CD8-positive, alpha-beta T cell (primary cell): ENCODE measurements at regions of chr1 and their contacts with region 1.

Region 1: GRCh38 chr1:77504986-77505385 is 177.5 kb downstream of the ZZZ3 start:
- DNase-seq: no peak
- ATAC-seq: no peak
- H3K4me3 ChIP-seq: no peak overlapping the region
- H3K4me3 Mint-ChIP-seq: no peak overlapping the region
- H3K27ac ChIP-seq: no peak overlapping the region
- H3K27ac Mint-ChIP-seq: peak overlapping the region; percentile 1
- H3K4me1 ChIP-seq: no peaks in the 10 kb centered on the region
- H3K4me1 Mint-ChIP-seq: peaks cover 7% of the 10 kb centered on the region
- H3K27me3 ChIP-seq: no peaks in the 10 kb centered on the region
- H3K27me3 Mint-ChIP-seq: no peaks in the 10 kb centered on the region
- CTCF ChIP-seq: no peak

Region 2: DNA sequence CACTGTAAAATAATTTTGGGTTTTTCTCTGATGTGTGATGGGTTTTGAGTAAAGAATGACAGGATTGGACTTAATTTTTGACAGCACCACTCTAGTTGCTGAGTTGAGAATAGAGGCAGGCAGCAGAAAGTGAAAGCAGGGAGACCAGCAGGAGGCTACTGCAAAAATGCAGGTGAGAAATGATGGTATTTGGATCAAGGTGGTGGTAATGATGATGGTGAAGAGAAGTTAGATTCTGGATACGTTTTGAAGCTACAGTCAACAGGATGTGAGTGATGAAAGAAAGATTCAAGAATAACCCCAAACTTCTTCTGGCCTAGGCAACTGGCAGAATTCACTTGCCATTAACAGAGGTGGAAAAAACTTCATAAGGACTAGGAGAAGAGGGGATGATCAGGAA is 238.0 kb before region 1 on chr1:
- CTCF ChIA-PET with region 1: no interaction called
- POLR2A ChIA-PET with region 1: no interaction called
- intact Hi-C with region 1: loop called in 1 of 2 experiments (anchors 10 kb)
- DNase-seq: peak in 1 of 9 experiments; percentile 6
- ATAC-seq: peak; percentile 62
- H3K4me3 ChIP-seq: no peak overlapping the region
- H3K4me3 Mint-ChIP-seq: no peak overlapping the region
- H3K27ac ChIP-seq: no peak overlapping the region
- H3K27ac Mint-ChIP-seq: no peak overlapping the region
- H3K4me1 ChIP-seq: peaks cover 12% of the 10 kb centered on the region
- H3K4me1 Mint-ChIP-seq: no peaks in the 10 kb centered on the region
- H3K27me3 ChIP-seq: peaks cover 0 to 3% of the 10 kb centered on the region in 2 experiments
- H3K27me3 Mint-ChIP-seq: peaks cover 3% of the 10 kb centered on the region
- CTCF ChIP-seq: no peak

Region 3: GRCh38 chr1:77524038-77524437 is 19.1 kb after region 1 on chr1:
- CTCF ChIA-PET with region 1: no interaction called
- POLR2A ChIA-PET with region 1: no interaction called
- intact Hi-C with region 1: no loop called
- DNase-seq: no peak
- ATAC-seq: no peak
- H3K4me3 ChIP-seq: no peak overlapping the region
- H3K4me3 Mint-ChIP-seq: no peak overlapping the region
- H3K27ac ChIP-seq: no peak overlapping the region
- H3K27ac Mint-ChIP-seq: peak overlapping the region; percentile 19
- H3K4me1 ChIP-seq: no peaks in the 10 kb centered on the region
- H3K4me1 Mint-ChIP-seq: peaks cover 9% of the 10 kb centered on the region
- H3K27me3 ChIP-seq: no peaks in the 10 kb centered on the region
- H3K27me3 Mint-ChIP-seq: no peaks in the 10 kb centered on the region
- CTCF ChIP-seq: no peak